ENCODE measurements at regions of chr7 and their contacts with region 1.

Region 1: GRCh38 chr7:126398851-126399529 is 853.8 kb downstream of the GRM8 start:
- DNase-seq: no peak
- ATAC-seq: no peak
- H3K4me3 Mint-ChIP-seq: no peak overlapping the region
- H3K27ac Mint-ChIP-seq: no peak overlapping the region
- H3K4me1 Mint-ChIP-seq: no peaks in the 10 kb centered on the region
- H3K27me3 Mint-ChIP-seq: no peaks in the 10 kb centered on the region

Region 2: DNA sequence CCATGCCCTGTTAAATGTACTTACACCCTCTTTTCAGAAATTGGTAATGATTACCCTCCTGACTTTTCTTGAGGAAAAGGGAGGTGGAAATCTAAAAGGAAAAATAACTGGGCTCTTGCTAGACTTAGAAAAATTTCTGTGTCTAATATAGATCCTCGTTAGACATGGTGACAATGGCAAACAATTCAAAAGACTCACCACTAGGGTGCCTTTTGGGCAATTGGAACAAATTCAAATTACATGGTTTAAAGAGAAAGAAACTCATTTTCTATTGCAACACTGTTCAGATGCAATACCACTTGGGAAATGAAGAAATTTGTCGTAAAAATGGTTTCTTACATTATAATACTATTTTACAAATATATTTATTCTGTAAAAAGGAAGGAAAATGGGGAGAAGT is 96.4 kb before region 1 on chr7:
- CTCF ChIA-PET with region 1: no interaction called
- POLR2A ChIA-PET with region 1: no interaction called
- intact Hi-C with region 1: no loop called
- DNase-seq: no peak
- ATAC-seq: no peak
- H3K4me3 Mint-ChIP-seq: no peak overlapping the region
- H3K27ac Mint-ChIP-seq: no peak overlapping the region
- H3K4me1 Mint-ChIP-seq: no peaks in the 10 kb centered on the region
- H3K27me3 Mint-ChIP-seq: no peaks in the 10 kb centered on the region

Region 3: DNA sequence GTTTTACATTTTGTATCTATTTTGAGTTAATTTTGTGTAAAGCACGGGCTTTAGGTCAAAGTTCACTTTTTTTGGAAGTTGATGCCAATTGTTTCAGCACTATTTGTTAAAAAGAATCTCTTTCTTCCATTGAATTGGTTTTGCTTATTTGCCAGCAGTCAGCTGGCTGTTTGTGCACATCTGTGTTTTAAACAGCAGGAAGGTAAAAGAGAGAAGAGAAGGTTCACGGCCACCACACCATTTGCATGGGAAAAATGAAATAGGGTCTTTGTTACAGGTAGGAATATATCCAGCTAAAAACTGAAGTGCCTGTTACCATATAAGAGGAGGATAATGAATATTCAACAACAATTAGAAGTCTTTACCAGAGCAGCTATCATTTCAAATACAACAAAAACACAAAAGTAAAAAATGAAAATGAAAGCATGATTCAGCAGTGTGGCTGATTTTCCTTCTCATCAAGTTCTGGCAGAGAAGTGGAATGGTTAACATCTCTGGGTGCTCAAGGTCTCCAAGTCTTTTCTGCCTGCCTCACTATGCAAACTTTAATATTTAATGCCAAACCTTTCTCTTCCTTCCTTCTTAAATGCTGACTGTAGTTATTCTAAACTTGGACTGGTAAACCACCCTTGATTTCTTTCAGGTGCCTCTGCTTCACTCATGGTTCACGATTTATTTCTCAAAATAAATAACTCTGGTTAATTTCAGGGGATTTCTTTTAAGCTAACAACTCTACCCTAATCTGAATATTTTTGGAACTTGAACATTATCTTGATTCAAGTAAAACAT is 12.2 kb after region 1 on chr7:
- CTCF ChIA-PET with region 1: interaction called, 11 read pairs
- POLR2A ChIA-PET with region 1: no interaction called
- intact Hi-C with region 1: loop called in 1 of 2 experiments (anchors 1 kb)
- DNase-seq: no peak
- ATAC-seq: no peak
- H3K4me3 Mint-ChIP-seq: no peak overlapping the region
- H3K27ac Mint-ChIP-seq: no peak overlapping the region
- H3K4me1 Mint-ChIP-seq: no peaks in the 10 kb centered on the region
- H3K27me3 Mint-ChIP-seq: no peaks in the 10 kb centered on the region

Measured in activated CD4-positive, alpha-beta T cell treated with anti-CD3 and anti-CD28 coated beads for 36 hours (primary cell).